Left colon (tissue), 2 donors: ENCODE measurements at regions of chr4 and their contacts with region 1.

Region 1: DNA sequence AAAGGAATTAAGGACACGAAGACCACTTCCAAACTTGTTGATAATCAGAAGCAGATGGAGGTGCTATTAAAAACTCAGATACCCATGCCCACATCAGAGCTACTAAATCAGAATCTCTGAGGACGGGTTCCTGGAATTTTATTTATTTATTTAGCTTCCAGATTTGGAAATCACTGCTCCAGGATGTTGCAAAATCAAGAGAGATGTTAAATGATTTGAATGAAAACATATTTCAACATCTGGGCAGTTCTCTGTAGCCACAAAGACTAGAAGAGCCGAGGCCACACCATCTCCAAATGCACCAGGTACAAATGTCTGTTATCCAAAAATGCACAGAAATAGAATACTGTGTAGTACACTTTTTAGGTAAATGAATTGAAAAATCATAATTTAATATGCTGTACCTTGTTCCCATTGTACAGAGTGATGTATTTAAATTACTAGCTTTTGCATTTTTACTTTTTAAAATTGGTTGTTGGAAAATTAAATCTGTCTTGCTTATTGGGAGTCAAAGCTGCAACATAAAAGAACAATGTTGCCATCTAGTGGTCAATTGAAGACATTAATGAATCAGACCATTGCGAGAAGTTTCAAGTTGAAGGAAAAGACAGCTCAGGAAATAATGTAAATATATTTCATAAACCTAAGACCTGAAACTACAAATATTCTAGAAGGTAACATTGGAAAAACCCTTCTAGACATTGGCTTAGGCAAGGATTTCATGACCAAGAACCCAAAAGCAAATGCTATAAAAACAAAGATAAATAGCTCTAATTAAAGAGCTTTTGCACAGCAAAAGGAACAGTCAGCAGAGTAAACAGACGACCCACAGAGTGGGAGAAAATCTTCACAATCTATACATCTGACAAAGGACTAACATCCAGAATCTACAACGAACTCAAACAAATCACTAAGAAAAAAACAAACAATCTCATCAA is 151.3 kb upstream of the TTC29 start:
- DNase-seq: no peak
- ATAC-seq: peak; percentile 38

Region 2: GRCh38 chr4:146957237-146957636 is 139.7 kb before region 1 on chr4:
- intact Hi-C with region 1: no loop called
- DNase-seq: no peak
- ATAC-seq: no peak

Region 3: DNA sequence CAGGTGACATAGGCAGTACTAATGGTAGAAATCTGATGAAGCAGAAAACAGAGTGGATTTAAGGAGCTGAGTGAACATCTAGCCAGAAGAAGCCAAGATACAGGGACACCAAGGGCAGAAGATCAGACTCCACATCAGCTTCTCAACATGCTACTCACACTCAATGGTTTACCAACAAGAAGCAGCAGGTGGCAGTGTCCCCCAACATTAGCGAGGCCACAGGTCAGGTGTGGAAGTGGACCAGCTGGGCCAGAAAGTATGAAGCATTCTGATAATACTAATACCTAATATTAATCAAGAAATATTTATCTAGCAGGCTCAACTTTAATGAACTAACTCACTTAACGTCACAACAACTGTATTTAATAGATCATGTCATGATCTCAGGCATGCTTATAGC is 77.9 kb before region 1 on chr4:
- intact Hi-C with region 1: loop called in 1 of 2 experiments (anchors 5 kb)
- DNase-seq: peak in 1 of 2 donors; percentile 54
- ATAC-seq: peak; percentile 61

Region 4: GRCh38 chr4:147371661-147372060 is 274.7 kb after region 1 on chr4:
- intact Hi-C with region 1: no loop called
- DNase-seq: no peak
- ATAC-seq: peak; percentile 39